CD4-positive, alpha-beta T cell (primary cell): ENCODE measurements at regions of chr7 and their contacts with region 1.

Region 1: GRCh38 chr7:114922016-114922651 is at the start of gene MDFIC:
- DNase-seq: peak in 13 of 14 experiments; percentile 27 to 84 (median 45)
- ATAC-seq: peak; percentile 55
- H3K4me3 ChIP-seq: peak within 1 kb of the TSS; percentile 82
- H3K4me3 Mint-ChIP-seq: peak within 1 kb of the TSS; percentile 98
- H3K27ac ChIP-seq: peak within 1 kb of the TSS; percentile 86 to 88
- H3K27ac Mint-ChIP-seq: peak within 1 kb of the TSS; percentile 90
- H3K4me1 ChIP-seq: peaks cover 13% of the 10 kb centered on the region
- H3K4me1 Mint-ChIP-seq: peaks cover 57% of the 10 kb centered on the region
- H3K27me3 ChIP-seq: no peaks in the 10 kb centered on the region
- H3K27me3 Mint-ChIP-seq: no peaks in the 10 kb centered on the region
- CTCF ChIP-seq: no peak
- total RNA-seq, gene MDFIC: 25.9 to 27.1 TPM

Region 2: GRCh38 chr7:114939484-114940097 is 17.5 kb after region 1 on chr7:
- CTCF ChIA-PET with region 1: interaction called, 4 read pairs
- POLR2A ChIA-PET with region 1: interaction called, 7 read pairs
- intact Hi-C with region 1: loop called in 1 of 2 experiments (anchors 2 kb)
- DNase-seq: peak in 5 of 14 experiments; percentile 20 to 59 (median 45)
- ATAC-seq: no peak
- H3K4me3 ChIP-seq: no peak overlapping the region
- H3K4me3 Mint-ChIP-seq: no peak overlapping the region
- H3K27ac ChIP-seq: no peak overlapping the region
- H3K27ac Mint-ChIP-seq: no peak overlapping the region
- H3K4me1 ChIP-seq: peaks cover 19% of the 10 kb centered on the region
- H3K4me1 Mint-ChIP-seq: peaks cover 68% of the 10 kb centered on the region
- H3K27me3 ChIP-seq: no peaks in the 10 kb centered on the region
- H3K27me3 Mint-ChIP-seq: no peaks in the 10 kb centered on the region
- CTCF ChIP-seq: no peak

Region 3: DNA sequence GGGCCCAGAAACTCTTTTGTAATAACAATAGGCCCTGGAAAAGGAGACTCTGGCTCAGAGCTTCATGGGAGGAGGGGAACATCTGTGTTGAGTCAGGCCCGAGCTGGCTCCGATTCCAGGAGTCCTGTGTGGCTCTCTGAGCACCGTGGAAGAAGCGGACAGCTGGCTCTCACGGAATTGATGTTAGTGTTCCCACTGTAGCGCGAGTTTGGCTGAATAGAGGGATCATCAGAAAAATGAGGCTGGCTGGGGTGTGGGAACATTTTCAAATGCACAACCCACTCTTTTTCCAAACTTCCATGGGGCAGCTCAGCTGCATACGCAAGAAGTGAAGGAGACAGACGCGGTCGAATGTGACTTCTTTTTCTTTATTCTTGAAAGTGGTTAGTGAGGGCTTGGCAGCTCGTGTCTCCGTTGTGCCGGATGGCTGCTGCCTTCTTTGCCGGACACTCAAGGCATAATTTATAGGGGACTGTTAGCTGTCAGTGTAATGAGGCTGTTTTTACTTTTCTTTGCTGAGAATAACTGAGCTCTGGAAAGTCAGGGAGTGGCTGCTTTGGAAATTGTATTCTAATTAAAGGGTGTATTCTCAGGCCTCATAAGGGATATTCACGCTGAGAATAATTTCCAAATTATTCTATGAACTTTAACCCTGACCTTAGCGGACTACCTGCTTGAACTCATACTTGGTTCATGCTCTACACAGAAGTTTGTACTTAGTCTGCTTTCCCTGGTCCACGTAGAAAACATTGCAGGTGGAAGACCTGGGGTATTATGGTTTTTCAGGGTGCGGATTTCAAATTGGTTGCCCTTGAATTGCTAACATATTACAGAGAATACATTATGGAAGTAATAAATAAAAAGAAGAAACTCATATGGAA is 22.9 kb after region 1 on chr7:
- CTCF ChIA-PET with region 1: interaction called, 4 read pairs
- POLR2A ChIA-PET with region 1: interaction called, 10 read pairs
- intact Hi-C with region 1: no loop called
- DNase-seq: no peak
- ATAC-seq: no peak
- H3K4me3 ChIP-seq: no peak overlapping the region
- H3K4me3 Mint-ChIP-seq: no peak overlapping the region
- H3K27ac ChIP-seq: no peak overlapping the region
- H3K27ac Mint-ChIP-seq: no peak overlapping the region
- H3K4me1 ChIP-seq: peaks cover 22% of the 10 kb centered on the region
- H3K4me1 Mint-ChIP-seq: peaks cover 69% of the 10 kb centered on the region
- H3K27me3 ChIP-seq: no peaks in the 10 kb centered on the region
- H3K27me3 Mint-ChIP-seq: no peaks in the 10 kb centered on the region
- CTCF ChIP-seq: no peak

Region 4: GRCh38 chr7:114979388-114979787 is 57.3 kb after region 1 on chr7:
- CTCF ChIA-PET with region 1: no interaction called
- POLR2A ChIA-PET with region 1: no interaction called
- intact Hi-C with region 1: loop called in 1 of 2 experiments (anchors 10 kb)
- DNase-seq: no peak
- ATAC-seq: no peak
- H3K4me3 ChIP-seq: no peak overlapping the region
- H3K4me3 Mint-ChIP-seq: no peak overlapping the region
- H3K27ac ChIP-seq: no peak overlapping the region
- H3K27ac Mint-ChIP-seq: no peak overlapping the region
- H3K4me1 ChIP-seq: peaks cover 7% of the 10 kb centered on the region
- H3K4me1 Mint-ChIP-seq: peaks cover 59% of the 10 kb centered on the region
- H3K27me3 ChIP-seq: no peaks in the 10 kb centered on the region
- H3K27me3 Mint-ChIP-seq: no peaks in the 10 kb centered on the region
- CTCF ChIP-seq: no peak

Region 5: DNA sequence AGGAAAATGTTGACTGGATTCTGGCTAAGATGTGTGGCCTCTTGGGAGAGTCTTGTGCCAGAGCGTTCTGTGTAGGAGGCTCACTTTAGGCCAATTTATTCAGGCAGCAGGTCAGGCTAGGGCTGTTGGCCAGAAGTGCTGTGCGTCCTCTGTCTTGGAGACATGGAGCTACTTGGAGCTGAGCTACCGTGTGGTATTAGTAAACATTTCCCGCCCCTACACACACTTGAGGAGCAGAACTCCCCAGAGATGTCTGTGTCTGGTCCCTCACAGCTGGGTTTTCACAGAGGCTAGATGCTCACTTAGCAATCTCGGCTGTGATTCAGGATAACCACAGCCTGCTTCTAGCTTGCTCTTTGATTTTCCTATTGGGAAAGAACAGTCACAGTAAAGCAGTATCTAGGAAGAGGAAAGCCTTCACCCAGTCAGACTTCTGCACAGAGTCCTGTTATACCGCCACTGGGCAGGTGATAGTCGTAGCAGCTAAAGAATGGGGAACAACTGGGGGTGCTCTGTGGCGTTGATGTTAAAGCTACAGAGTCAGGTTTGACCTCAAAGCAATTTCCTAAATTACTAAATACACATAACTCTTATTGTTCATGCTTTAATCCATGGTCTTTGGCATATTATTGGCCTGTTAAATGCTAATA is 86.5 kb after region 1 on chr7:
- CTCF ChIA-PET with region 1: no interaction called
- POLR2A ChIA-PET with region 1: interaction called, 5 read pairs
- intact Hi-C with region 1: loop called in 1 of 2 experiments (anchors 5 kb)
- DNase-seq: peak in 2 of 14 experiments; percentile 26 to 41
- ATAC-seq: peak; percentile 41
- H3K4me3 ChIP-seq: peak overlapping the region; percentile 33
- H3K4me3 Mint-ChIP-seq: peak overlapping the region; percentile 73
- H3K27ac ChIP-seq: peak overlapping the region; percentile 57 to 59
- H3K27ac Mint-ChIP-seq: peak overlapping the region; percentile 93
- H3K4me1 ChIP-seq: peaks cover 47% of the 10 kb centered on the region
- H3K4me1 Mint-ChIP-seq: peaks cover 84% of the 10 kb centered on the region
- H3K27me3 ChIP-seq: no peaks in the 10 kb centered on the region
- H3K27me3 Mint-ChIP-seq: no peaks in the 10 kb centered on the region
- CTCF ChIP-seq: no peak